ENCODE measurements at regions of chr17 and their contacts with region 1.

Region 1: GRCh38 chr17:28335201-28335955 is at the starts of genes IFT20 and TNFAIP1:
- DNase-seq: peak; percentile 94
- ATAC-seq: peak; percentile 98
- H3K4me3 ChIP-seq: peak within 1 kb of the TSS; percentile 87 to 95
- H3K27ac ChIP-seq: peak within 1 kb of the TSS; percentile 94
- H3K4me1 ChIP-seq: peaks cover 27% of the 10 kb centered on the region
- H3K27me3 ChIP-seq: no peaks in the 10 kb centered on the region
- CTCF ChIP-seq: no peak
- total RNA-seq, gene IFT20: 25.4 TPM
- total RNA-seq, gene TNFAIP1: 55.8 TPM

Region 2: DNA sequence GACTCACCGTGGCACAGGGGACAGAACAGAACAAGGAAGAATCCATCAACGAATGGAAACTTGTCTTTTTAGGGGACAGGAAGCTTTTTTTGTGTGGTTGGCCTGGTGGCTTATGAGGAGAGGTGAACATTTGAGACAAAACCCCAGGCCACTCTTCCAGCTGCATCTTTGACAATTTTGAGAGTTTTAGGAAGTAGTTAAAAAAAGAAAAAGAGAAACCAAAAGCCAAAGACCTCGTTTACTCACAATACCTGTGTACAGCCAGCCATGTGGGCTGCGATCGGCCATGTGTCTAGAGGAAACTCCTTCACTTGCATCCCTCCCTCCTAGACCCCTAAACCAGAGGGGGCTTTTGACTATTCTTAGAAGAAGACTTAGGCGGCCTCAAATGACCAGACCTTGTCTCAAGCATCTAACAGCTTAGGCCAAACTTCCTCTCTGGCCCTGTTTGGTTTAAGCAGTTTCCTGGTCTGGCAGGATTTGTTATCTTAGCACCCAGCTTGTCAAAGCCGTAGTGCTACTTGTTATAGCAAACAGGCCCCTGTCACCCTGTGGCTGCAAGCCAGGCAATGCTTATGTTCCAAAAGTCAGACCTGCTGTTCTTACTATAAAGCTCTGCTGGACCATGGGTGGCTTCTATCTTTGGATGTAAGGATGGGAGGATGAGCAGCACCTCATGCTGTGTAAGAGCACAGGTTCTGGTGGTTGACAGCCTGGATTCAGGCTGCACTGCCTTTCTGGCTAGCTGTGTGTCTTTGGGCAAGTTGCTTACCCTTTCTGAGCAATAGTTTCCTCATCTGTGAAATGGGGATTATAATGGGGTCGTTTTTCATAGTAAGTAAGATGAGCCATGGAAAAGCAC is 861.4 kb before region 1 on chr17:
- CTCF ChIA-PET with region 1: no interaction called
- POLR2A ChIA-PET with region 1: interaction called, 11 read pairs
- in situ Hi-C with region 1: no loop called
- intact Hi-C with region 1: no loop called
- DNase-seq: no peak
- ATAC-seq: no peak
- H3K4me3 ChIP-seq: no peak overlapping the region
- H3K27ac ChIP-seq: peak overlapping the region; percentile 19; the same call in 1 of the 2 replicates
- H3K4me1 ChIP-seq: peaks cover 23% of the 10 kb centered on the region
- H3K27me3 ChIP-seq: no peaks in the 10 kb centered on the region
- CTCF ChIP-seq: no peak

Region 3: DNA sequence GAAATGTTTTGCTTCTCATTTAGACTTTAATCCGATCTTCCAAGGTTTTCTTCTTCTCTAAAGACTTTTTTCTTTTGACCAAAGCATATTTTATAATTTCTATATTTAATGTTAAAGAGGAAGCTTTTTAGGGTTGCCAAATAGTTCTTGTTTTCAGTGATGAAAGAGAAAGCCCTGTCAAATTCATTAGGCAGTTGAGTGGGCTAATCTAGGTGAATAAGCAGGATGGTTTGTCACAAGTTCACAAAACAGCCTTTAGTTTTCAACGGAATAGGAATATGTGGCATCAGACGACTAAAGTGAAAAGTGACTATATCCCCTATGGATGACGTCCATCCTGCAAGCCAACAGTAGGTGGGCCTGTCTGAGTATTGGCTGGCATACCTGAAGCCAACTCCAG is 174.1 kb before region 1 on chr17:
- CTCF ChIA-PET with region 1: no interaction called
- POLR2A ChIA-PET with region 1: no interaction called
- in situ Hi-C with region 1: no loop called
- intact Hi-C with region 1: no loop called
- DNase-seq: no peak
- ATAC-seq: no peak
- H3K4me3 ChIP-seq: no peak overlapping the region
- H3K27ac ChIP-seq: no peak overlapping the region
- H3K4me1 ChIP-seq: no peaks in the 10 kb centered on the region
- H3K27me3 ChIP-seq: no peaks in the 10 kb centered on the region
- CTCF ChIP-seq: no peak

Region 4: GRCh38 chr17:28345420-28346198 is 10.2 kb after region 1 on chr17:
- CTCF ChIA-PET with region 1: interaction called, 5 read pairs
- POLR2A ChIA-PET with region 1: interaction called, 11 read pairs
- in situ Hi-C with region 1: no loop called
- intact Hi-C with region 1: no loop called
- DNase-seq: no peak
- ATAC-seq: no peak
- H3K4me3 ChIP-seq: no peak overlapping the region
- H3K27ac ChIP-seq: peak overlapping the region; percentile 65
- H3K4me1 ChIP-seq: peaks cover 26% of the 10 kb centered on the region
- H3K27me3 ChIP-seq: no peaks in the 10 kb centered on the region
- CTCF ChIP-seq: no peak

Measured in Panc1 (cell line).